Activated naive CD4-positive, alpha-beta T cell treated with anti-CD3 and anti-CD28 coated beads for 36 hours (primary cell): ENCODE measurements at regions of chr9 and their contacts with region 1.

Region 1: DNA sequence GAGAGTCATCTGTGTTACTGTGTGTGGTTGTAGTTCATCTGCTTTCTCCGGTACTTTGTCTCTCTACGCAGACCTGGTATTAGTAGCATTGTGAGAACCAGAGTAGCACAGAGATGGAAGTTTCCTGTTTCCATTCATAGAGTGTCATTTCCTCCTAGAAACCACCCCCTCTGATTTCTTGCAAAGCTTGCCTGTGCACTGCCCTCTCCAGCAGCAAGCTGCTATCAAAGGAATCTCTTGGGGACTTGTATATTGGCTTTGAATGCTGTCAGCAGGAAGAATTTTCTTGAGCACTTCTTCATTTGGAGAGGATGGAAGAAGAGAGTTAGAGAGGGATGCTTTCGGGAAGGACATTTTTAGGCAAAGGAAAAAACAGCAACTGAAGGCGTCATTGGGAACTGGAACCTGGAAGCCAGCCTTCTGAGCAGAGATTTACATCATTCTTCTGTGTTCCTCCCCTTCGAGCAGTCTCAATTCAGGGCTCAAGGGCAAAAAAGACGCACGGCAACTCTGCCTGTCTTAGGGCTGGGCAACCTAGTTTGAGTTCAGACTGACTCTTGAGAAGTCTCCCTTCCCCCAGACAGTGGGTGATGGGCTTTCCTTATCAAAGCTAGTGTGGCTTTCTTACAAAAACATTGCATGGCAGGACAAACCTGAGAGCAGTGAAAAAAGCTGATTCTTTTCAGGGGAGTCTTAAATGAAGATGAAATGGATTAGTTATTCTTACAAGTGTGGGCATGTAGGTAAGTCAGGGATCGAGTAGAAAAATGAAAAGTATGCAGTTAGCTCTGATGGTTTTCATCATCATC is 226.3 kb downstream of the AOPEP start:
- DNase-seq: peak; percentile 44
- H3K4me3 Mint-ChIP-seq: no peak overlapping the region
- H3K27ac Mint-ChIP-seq: no peak overlapping the region
- H3K4me1 Mint-ChIP-seq: peaks cover 39% of the 10 kb centered on the region
- H3K27me3 Mint-ChIP-seq: no peaks in the 10 kb centered on the region

Region 2: DNA sequence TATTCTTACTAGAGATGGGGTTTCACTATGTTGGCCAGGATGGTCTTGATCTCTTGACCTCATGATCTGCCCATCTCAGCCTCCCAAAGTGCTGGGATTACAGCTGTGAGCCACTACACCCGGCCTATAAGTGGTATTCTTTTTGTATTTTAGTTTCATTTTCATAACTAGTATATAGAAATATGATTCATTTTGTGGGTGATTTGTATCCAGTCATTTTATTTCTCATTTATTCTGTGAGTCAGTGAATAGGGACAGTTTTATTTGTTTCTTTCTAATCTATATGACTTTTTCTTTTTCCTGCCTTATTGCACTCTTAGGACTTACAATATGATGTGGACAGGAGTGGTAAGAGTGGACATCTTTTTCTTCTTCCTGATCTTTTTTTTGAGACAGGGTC is 113.4 kb before region 1 on chr9:
- CTCF ChIA-PET with region 1: no interaction called
- intact Hi-C with region 1: loop called (anchors 2 kb)
- DNase-seq: no peak
- H3K4me3 Mint-ChIP-seq: no peak overlapping the region
- H3K27ac Mint-ChIP-seq: no peak overlapping the region
- H3K4me1 Mint-ChIP-seq: peaks cover 19% of the 10 kb centered on the region
- H3K27me3 Mint-ChIP-seq: no peaks in the 10 kb centered on the region

Region 3: GRCh38 chr9:94860968-94861871 is 91.5 kb before region 1 on chr9:
- CTCF ChIA-PET with region 1: no interaction called
- intact Hi-C with region 1: loop called (anchors 5 kb)
- DNase-seq: peak; percentile 83
- H3K4me3 Mint-ChIP-seq: peak overlapping the region; percentile 28
- H3K27ac Mint-ChIP-seq: peak overlapping the region; percentile 54
- H3K4me1 Mint-ChIP-seq: peaks cover 38% of the 10 kb centered on the region
- H3K27me3 Mint-ChIP-seq: no peaks in the 10 kb centered on the region

Region 4: DNA sequence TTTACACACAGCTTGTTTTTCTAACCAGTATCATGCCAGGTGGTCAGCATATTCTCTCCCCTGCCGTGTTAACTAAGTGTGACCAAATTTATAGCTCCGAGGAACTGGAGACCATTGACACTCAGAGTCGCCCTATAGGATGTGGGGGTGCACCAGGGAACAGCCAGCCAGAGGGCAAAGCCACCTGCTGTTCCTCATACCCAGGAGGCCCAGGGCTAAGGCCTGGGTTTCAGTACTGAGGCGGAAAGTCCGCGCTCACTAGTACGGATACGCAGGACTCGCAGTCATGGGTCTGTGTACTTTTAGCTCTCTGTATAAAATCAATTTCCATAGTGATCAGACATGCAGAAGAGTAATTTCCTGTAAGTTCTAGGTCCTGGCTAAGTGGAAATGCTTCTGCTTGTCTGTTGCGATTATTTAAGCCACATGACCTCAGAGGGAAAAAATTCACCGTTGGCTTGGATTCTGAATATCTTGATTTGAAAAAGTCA is 20.7 kb after region 1 on chr9:
- CTCF ChIA-PET with region 1: no interaction called
- intact Hi-C with region 1: no loop called
- DNase-seq: no peak
- H3K4me3 Mint-ChIP-seq: no peak overlapping the region
- H3K27ac Mint-ChIP-seq: no peak overlapping the region
- H3K4me1 Mint-ChIP-seq: no peaks in the 10 kb centered on the region
- H3K27me3 Mint-ChIP-seq: no peaks in the 10 kb centered on the region

Region 5: DNA sequence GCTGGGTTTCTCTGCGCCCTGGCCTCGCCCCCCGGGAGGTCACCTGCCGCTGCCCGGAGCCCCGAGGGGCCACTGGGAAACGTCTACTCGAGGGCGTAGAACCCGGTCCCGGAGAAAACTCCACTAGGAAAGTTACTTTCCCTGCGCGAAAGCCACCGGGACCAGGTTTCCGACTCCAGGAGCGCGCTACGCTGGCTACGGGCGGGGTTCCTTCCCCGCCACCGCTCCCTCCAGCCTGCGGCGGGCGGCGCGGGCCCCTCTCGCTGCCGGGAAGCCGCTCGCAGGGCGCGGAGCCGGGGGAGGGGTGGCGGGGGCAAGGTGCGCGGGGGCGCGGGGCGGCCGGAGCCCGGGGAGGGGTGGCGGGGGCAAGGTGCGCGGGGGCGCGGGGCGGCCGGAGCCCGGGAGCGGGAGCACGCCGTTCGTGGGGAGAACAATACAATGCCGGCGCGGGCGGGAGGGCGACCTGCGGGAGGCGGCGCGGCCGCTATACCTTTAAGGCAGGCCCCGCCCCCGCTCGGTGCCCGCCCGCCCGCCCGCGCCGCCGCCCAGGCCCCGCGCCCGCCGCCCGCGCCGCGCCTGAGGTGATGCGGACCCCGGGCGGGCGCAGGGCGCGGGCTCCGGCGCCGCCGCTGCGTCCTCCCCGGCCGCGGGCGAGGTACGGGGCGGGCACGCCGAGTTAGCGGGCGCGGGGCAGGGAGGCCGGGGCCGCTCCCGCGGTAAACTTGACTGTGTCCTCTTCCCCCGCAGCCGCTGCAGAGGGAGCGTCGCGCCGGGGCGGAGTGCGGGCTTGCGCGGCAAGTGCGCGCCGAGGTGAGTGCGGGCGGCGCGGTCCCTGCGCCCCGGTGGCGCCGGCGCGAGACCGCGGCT is 51.9 kb after region 1 on chr9:
- CTCF ChIA-PET with region 1: no interaction called
- intact Hi-C with region 1: loop called (anchors 1 kb)
- DNase-seq: peak; percentile 28
- H3K4me3 Mint-ChIP-seq: peak overlapping the region; percentile 69
- H3K27ac Mint-ChIP-seq: no peak overlapping the region
- H3K4me1 Mint-ChIP-seq: peaks cover 8% of the 10 kb centered on the region
- H3K27me3 Mint-ChIP-seq: peaks cover 36% of the 10 kb centered on the region